Naive thymus-derived CD4-positive, alpha-beta T cell (primary cell): ENCODE measurements at regions of chr21 and their contacts with region 1.

Region 1: GRCh38 chr21:33324291-33325221 is at the start of gene IFNAR1:
- DNase-seq: peak; percentile 94 to 100 (median 98)
- ATAC-seq: peak; percentile 94
- H3K4me3 ChIP-seq: peak within 1 kb of the TSS; percentile 87
- H3K4me3 Mint-ChIP-seq: no peak within 1 kb of the TSS
- H3K27ac ChIP-seq: peak within 1 kb of the TSS; percentile 94
- H3K27ac Mint-ChIP-seq: no peak within 1 kb of the TSS
- H3K4me1 ChIP-seq: peaks cover 21 to 23% of the 10 kb centered on the region in 2 donors
- H3K4me1 Mint-ChIP-seq: peaks cover 0 to 33% (median 26%) of the 10 kb centered on the region in 7 donors
- H3K27me3 ChIP-seq: no peaks in the 10 kb centered on the region
- H3K27me3 Mint-ChIP-seq: peaks cover 0 to 2% (median 0%) of the 10 kb centered on the region in 5 donors
- total RNA-seq, gene IFNAR1: 24.7 to 60.8 (median 40.0) TPM

Region 2: DNA sequence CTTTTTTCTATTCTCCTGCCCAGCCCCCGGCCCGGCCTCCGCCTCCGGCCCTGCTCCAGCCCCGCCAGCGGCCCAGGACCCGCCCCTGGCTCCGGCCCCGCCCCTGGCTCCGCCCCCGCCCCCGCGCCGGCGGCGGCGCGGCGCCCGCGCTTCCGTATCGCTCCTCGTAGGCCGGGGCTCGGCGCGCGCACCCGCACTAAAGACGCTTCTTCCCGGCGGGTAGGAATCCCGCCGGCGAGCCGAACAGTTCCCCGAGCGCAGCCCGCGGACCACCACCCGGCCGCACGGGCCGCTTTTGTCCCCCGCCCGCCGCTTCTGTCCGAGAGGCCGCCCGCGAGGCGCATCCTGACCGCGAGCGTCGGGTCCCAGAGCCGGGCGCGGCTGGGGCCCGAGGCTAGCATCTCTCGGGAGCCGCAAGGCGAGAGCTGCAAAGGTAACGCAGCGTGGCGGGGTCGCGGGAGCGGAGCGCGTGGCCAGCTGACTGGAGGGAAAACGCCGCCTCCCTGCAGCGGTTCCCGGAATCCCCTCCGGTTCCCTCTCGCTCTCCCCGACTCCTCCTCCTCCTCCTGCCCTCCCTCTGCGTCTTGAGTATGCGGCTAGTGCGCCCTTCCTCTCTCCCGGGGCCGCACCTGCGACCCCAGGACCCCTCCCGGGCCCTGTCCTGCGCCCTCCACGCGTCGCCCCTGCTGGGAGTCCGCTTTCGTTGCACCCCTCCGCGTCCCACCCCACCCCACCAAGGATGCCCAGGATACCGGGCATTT is 94.6 kb before region 1 on chr21 and contains the start of gene IFNAR2:
- CTCF ChIA-PET with region 1: no interaction called
- POLR2A ChIA-PET with region 1: interaction called, 24 read pairs
- intact Hi-C with region 1: loop called (anchors 1 to 2 kb)
- DNase-seq: peak; percentile 55 to 82 (median 68)
- ATAC-seq: peak; percentile 93
- H3K4me3 ChIP-seq: peak within 1 kb of the TSS; percentile 83
- H3K4me3 Mint-ChIP-seq: peak within 1 kb of the TSS; percentile 88 to 97 (median 92)
- H3K27ac ChIP-seq: peak within 1 kb of the TSS; percentile 92
- H3K27ac Mint-ChIP-seq: peak within 1 kb of the TSS; percentile 83 to 98 (median 90)
- H3K4me1 ChIP-seq: peaks cover 22 to 40% of the 10 kb centered on the region in 2 donors
- H3K4me1 Mint-ChIP-seq: peaks cover 35 to 59% (median 51%) of the 10 kb centered on the region in 7 donors
- H3K27me3 ChIP-seq: no peaks in the 10 kb centered on the region
- H3K27me3 Mint-ChIP-seq: no peaks in the 10 kb centered on the region
- total RNA-seq, gene IFNAR2: 44.9 to 85.8 (median 60.8) TPM

Region 3: DNA sequence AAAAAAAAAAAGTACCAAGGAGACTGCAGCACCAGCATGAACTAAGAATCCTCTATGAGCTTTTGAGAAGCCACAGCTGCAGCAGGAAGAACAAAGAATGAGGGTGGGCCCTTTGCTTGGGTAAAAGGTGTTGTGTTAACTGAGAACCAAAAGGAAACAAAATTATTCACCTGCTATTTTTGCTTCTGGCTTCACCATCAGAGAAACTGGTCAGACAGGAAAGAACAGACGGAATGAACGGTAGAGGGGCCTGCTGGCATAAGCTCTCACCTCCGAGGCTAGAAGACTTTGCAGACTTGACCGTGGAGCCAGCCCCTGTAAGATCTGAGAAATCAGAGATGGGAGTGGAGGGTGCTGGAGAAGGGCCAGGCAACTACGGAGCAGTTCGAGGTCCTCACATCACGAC is 30.7 kb before region 1 on chr21:
- CTCF ChIA-PET with region 1: no interaction called
- POLR2A ChIA-PET with region 1: interaction called, 42 read pairs
- intact Hi-C with region 1: loop called in 1 of 2 experiments (anchors 1 kb)
- DNase-seq: peak in 7 of 9 donors; percentile 26 to 74 (median 63)
- ATAC-seq: peak; percentile 75
- H3K4me3 ChIP-seq: no peak overlapping the region
- H3K4me3 Mint-ChIP-seq: peak overlapping the region in 9 of 10 donors; percentile 48 to 84 (median 73)
- H3K27ac ChIP-seq: peak overlapping the region; percentile 53
- H3K27ac Mint-ChIP-seq: peak overlapping the region; percentile 60 to 96 (median 87)
- H3K4me1 ChIP-seq: peaks cover under 1 to 28% of the 10 kb centered on the region in 2 donors
- H3K4me1 Mint-ChIP-seq: peaks cover 22 to 52% (median 44%) of the 10 kb centered on the region in 7 donors
- H3K27me3 ChIP-seq: no peaks in the 10 kb centered on the region
- H3K27me3 Mint-ChIP-seq: no peaks in the 10 kb centered on the region

Region 4: GRCh38 chr21:33308586-33309490 is 15.7 kb before region 1 on chr21:
- CTCF ChIA-PET with region 1: interaction called, 7 read pairs
- POLR2A ChIA-PET with region 1: interaction called, 12 read pairs
- intact Hi-C with region 1: no loop called
- DNase-seq: peak in 7 of 9 donors; percentile 26 to 60 (median 40)
- ATAC-seq: peak; percentile 38
- H3K4me3 ChIP-seq: no peak overlapping the region
- H3K4me3 Mint-ChIP-seq: peak overlapping the region in 3 of 10 donors; percentile 5 to 12 (median 5)
- H3K27ac ChIP-seq: peak overlapping the region; percentile 3
- H3K27ac Mint-ChIP-seq: peak overlapping the region in 7 of 9 donors; percentile 1 to 80 (median 23)
- H3K4me1 ChIP-seq: peaks cover 0 to 12% of the 10 kb centered on the region in 2 donors
- H3K4me1 Mint-ChIP-seq: peaks cover 9 to 43% (median 31%) of the 10 kb centered on the region in 7 donors
- H3K27me3 ChIP-seq: no peaks in the 10 kb centered on the region
- H3K27me3 Mint-ChIP-seq: peaks cover 0 to 10% (median 0%) of the 10 kb centered on the region in 5 donors

Region 5: GRCh38 chr21:33380483-33380998 is 56.0 kb after region 1 on chr21:
- CTCF ChIA-PET with region 1: no interaction called
- POLR2A ChIA-PET with region 1: interaction called, 11 read pairs
- intact Hi-C with region 1: loop called (anchors 1 kb)
- DNase-seq: peak; percentile 46 to 81 (median 63)
- ATAC-seq: peak; percentile 78
- H3K4me3 ChIP-seq: peak overlapping the region; percentile 0
- H3K4me3 Mint-ChIP-seq: peak overlapping the region; percentile 34 to 98 (median 66)
- H3K27ac ChIP-seq: peak overlapping the region; percentile 53
- H3K27ac Mint-ChIP-seq: peak overlapping the region; percentile 69 to 91 (median 87)
- H3K4me1 ChIP-seq: peaks cover 45 to 60% of the 10 kb centered on the region in 2 donors
- H3K4me1 Mint-ChIP-seq: peaks cover 48 to 70% (median 63%) of the 10 kb centered on the region in 7 donors
- H3K27me3 ChIP-seq: peaks cover 0 to 6% of the 10 kb centered on the region in 2 donors
- H3K27me3 Mint-ChIP-seq: peaks cover 0 to 40% (median 0%) of the 10 kb centered on the region in 5 donors

Region 6: GRCh38 chr21:33441489-33442477 is 117.2 kb after region 1 on chr21:
- CTCF ChIA-PET with region 1: interaction called, 5 read pairs
- POLR2A ChIA-PET with region 1: no interaction called
- intact Hi-C with region 1: loop called (anchors 1 kb)
- DNase-seq: no peak
- ATAC-seq: no peak
- H3K4me3 ChIP-seq: no peak overlapping the region
- H3K4me3 Mint-ChIP-seq: no peak overlapping the region
- H3K27ac ChIP-seq: no peak overlapping the region
- H3K27ac Mint-ChIP-seq: peak overlapping the region in 6 of 9 donors; percentile 9 to 78 (median 55)
- H3K4me1 ChIP-seq: no peaks in the 10 kb centered on the region
- H3K4me1 Mint-ChIP-seq: peaks cover 4 to 10% (median 6%) of the 10 kb centered on the region in 7 donors
- H3K27me3 ChIP-seq: no peaks in the 10 kb centered on the region
- H3K27me3 Mint-ChIP-seq: no peaks in the 10 kb centered on the region

Region 7: DNA sequence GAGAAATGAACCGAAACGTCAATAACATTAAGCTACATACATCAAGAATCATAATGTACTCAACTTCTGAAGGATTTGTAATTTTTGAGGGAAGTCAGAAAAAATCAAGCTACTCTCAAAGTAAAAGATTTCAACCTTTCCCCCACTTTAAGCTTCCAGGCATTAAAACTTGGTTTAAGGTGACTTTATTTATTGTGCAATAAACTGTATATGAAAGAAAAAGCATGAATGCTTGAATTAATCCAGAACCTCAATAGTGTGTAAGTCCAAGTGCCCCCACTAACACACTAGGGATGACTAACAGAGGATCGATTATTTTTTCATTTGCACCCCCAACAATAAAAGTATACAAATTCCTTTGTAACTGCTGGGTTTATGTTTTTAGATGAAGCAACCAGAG is 206.5 kb after region 1 on chr21:
- CTCF ChIA-PET with region 1: no interaction called
- POLR2A ChIA-PET with region 1: no interaction called
- intact Hi-C with region 1: no loop called
- DNase-seq: no peak
- ATAC-seq: no peak
- H3K4me3 ChIP-seq: no peak overlapping the region
- H3K4me3 Mint-ChIP-seq: no peak overlapping the region
- H3K27ac ChIP-seq: no peak overlapping the region
- H3K27ac Mint-ChIP-seq: no peak overlapping the region
- H3K4me1 ChIP-seq: no peaks in the 10 kb centered on the region
- H3K4me1 Mint-ChIP-seq: peaks cover 0 to 2% (median 0%) of the 10 kb centered on the region in 7 donors
- H3K27me3 ChIP-seq: no peaks in the 10 kb centered on the region
- H3K27me3 Mint-ChIP-seq: no peaks in the 10 kb centered on the region